Mammary epithelial cell (primary cell): ENCODE measurements at regions of chr2 and their contacts with region 1.

Region 1: GRCh38 chr2:183840061-183840584 is 715.9 kb downstream of the NUP35 start:
- DNase-seq: no peak
- H3K4me3 ChIP-seq: no peak overlapping the region
- H3K27ac ChIP-seq: no peak overlapping the region
- H3K4me1 ChIP-seq: no peaks in the 10 kb centered on the region
- H3K27me3 ChIP-seq: no peaks in the 10 kb centered on the region
- CTCF ChIP-seq: no peak

Region 2: GRCh38 chr2:183825710-183826109 is 14.4 kb before region 1 on chr2:
- CTCF ChIA-PET with region 1: no interaction called
- dilution Hi-C with region 1: no loop called
- in situ Hi-C with region 1: no loop called
- intact Hi-C with region 1: no loop called
- DNase-seq: no peak
- H3K4me3 ChIP-seq: no peak overlapping the region
- H3K27ac ChIP-seq: no peak overlapping the region
- H3K4me1 ChIP-seq: no peaks in the 10 kb centered on the region
- H3K27me3 ChIP-seq: no peaks in the 10 kb centered on the region
- CTCF ChIP-seq: no peak

Region 3: DNA sequence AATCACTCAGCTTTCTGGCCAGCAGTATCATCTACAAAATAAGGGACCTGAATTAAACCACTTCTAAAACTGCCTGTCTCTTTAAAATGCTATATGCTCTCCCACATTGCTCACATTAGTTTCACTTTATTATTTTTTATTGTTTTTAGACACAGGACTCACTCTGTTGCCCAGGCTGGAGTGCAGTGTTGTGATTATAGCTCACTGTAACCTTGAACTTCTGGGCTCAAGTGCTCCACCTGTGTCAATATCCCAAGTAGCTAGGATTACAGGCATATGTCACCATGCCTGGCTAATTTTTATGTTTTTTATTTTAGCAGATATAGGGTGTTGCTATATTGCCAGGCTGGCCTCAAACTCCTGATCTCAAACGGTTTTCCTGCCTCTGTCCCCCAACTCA is 166.9 kb after region 1 on chr2:
- CTCF ChIA-PET with region 1: interaction called, 12 read pairs
- dilution Hi-C with region 1: no loop called
- in situ Hi-C with region 1: no loop called
- intact Hi-C with region 1: no loop called
- DNase-seq: no peak
- H3K4me3 ChIP-seq: no peak overlapping the region
- H3K27ac ChIP-seq: no peak overlapping the region
- H3K4me1 ChIP-seq: no peaks in the 10 kb centered on the region
- H3K27me3 ChIP-seq: no peaks in the 10 kb centered on the region
- CTCF ChIP-seq: no peak